Caki2 (cell line): ENCODE measurements at regions of chr9 and their contacts with region 1.

Region 1: GRCh38 chr9:98998441-98999151 is 54.9 kb downstream of the COL15A1 start:
- DNase-seq: peak; percentile 43

Region 2: DNA sequence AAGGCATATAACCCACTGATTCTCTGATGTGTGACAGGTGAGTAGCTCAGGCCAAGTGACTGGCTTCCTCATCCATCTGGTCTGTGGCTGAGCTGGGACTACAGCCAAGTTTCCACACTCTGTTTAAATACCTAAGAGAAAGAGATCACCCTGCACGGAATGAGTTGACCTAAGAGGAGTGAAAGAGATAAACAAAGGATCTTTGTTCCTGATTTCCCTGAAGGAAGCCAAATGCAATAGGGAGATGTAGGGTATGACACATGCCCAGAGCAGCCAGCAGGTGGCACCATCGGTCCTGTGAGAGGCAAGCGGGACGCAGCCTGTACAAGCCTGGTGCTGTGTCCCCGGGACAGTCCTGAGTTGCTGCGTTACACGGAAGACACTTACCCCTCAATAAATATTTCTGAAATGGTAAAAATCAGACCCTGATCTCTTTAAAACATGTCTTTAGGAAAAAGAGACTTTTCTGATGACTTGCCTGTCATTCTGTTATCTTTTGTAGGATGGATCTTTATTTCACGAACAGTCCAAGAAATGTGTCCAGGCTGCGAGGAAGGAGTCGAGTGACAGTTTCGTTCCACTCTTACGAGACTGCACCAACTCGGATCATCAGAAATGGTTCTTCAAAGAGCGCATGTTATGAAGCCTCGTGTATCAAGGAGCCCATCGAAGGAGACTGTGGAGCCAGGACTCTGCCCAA is 150.0 kb before region 1 on chr9:
- in situ Hi-C with region 1: loop called (anchors 10 kb)
- DNase-seq: peak; percentile 97

Region 3: DNA sequence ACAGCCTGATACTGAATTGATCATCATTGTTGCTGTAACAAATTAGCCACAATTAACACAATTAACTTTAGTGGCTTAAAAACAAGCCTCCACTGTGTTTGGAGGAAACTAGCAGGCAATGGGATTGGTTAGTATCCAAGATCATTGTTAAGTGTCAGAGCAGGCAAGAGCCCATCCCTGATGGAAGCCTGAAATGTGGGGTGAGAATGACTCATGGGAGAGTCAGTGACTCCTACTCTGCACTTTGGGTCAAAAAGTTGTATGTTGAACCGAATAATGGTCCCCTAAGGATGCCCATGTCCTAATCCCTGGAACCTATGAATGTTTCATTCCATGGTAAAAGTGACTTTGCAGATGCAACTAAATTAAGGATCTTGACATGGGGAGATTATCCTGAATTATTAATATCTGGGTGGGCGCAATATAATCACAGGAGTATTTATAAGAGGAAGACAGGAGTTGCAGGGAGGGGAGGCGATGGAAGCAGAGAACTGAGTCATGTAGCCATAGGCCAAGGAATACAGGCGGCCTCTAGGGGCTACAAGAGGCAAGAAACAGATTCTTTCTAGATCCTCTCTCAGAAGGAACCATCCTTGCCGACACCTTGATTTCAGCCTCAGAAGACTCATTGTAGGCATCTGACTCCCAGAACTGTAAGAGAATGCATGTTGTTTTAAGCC is 194.3 kb after region 1 on chr9:
- in situ Hi-C with region 1: no loop called
- DNase-seq: no peak